Breast epithelium (tissue), 4 donors: ENCODE measurements at regions of chr12 and their contacts with region 1.

Region 1: GRCh38 chr12:835754-836518 is 83.6 kb downstream of the WNK1 start:
- DNase-seq: no peak
- H3K4me3 ChIP-seq: no peak overlapping the region
- H3K27ac ChIP-seq: no peak overlapping the region
- H3K4me1 ChIP-seq: no peaks in the 10 kb centered on the region
- H3K27me3 ChIP-seq: no peaks in the 10 kb centered on the region
- CTCF ChIP-seq: no peak
- POLR2A ChIP-seq: no peak

Region 2: DNA sequence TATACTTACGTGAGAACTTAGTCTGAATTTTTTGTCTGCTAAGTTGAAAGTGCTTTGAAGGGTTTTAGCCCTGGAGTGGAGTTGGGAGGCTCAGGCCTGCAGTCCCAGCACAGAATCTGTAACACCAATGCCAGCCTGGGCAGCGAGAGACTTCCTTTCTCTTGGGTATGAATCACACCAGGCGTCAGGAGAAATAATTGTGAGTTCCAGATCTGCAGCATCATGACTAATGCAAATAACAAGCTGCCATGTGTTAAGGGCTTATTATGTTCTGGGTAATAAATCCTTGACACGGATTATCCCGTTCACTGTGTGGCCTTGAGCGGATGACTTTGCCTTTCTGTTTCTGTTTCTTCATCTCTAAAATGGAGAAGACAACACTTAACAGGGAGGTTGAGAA is 305.6 kb before region 1 on chr12:
- intact Hi-C with region 1: no loop called
- DNase-seq: no peak
- H3K4me3 ChIP-seq: no peak overlapping the region
- H3K27ac ChIP-seq: no peak overlapping the region
- H3K4me1 ChIP-seq: no peaks in the 10 kb centered on the region
- H3K27me3 ChIP-seq: no peaks in the 10 kb centered on the region
- CTCF ChIP-seq: no peak
- POLR2A ChIP-seq: no peak

Region 3: GRCh38 chr12:879641-880040 is 43.7 kb after region 1 on chr12:
- intact Hi-C with region 1: loop called (anchors 2 kb)
- DNase-seq: no peak
- H3K4me3 ChIP-seq: no peak overlapping the region
- H3K27ac ChIP-seq: no peak overlapping the region
- H3K4me1 ChIP-seq: no peaks in the 10 kb centered on the region
- H3K27me3 ChIP-seq: no peaks in the 10 kb centered on the region
- CTCF ChIP-seq: no peak
- POLR2A ChIP-seq: no peak

Region 4: DNA sequence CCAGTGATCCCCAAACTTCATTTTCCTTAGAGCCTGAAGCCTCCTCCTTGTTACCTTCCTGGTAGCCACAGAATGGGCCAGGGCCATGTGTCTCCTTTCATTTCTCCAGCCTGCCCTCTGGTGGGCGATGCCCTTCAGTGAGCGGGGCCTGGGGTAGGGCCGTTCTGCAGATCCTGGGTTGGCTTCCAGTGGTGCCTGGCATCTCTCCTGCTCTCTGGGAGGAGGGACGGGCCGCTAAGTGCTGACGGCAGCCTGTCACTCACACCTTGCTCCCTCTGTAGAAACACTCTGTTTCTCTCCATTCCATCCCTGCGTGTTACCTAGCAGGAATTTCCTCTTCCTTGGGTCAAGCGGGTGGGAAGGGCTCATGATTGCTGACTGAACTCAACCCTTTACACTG is 1448.9 kb after region 1 on chr12:
- intact Hi-C with region 1: no loop called
- DNase-seq: peak; percentile 52 to 68
- H3K4me3 ChIP-seq: peak overlapping the region in 1 of 3 donors; percentile 49
- H3K27ac ChIP-seq: peak overlapping the region in 1 of 2 donors; percentile 91
- H3K4me1 ChIP-seq: peaks cover 10 to 39% of the 10 kb centered on the region in 2 donors
- H3K27me3 ChIP-seq: no peaks in the 10 kb centered on the region
- CTCF ChIP-seq: peak in 2 of 3 donors; percentile 45 to 50
- POLR2A ChIP-seq: no peak